ENCODE measurements at regions of chr15 and their contacts with region 1.

Region 1: GRCh38 chr15:38602901-38603670 is 38.5 kb upstream of the RASGRP1 start:
- DNase-seq: no peak
- H3K4me3 ChIP-seq: no peak overlapping the region
- H3K27ac ChIP-seq: no peak overlapping the region
- H3K4me1 ChIP-seq: peaks cover 14% of the 10 kb centered on the region
- CTCF ChIP-seq: no peak

Region 2: GRCh38 chr15:37981775-37982174 is 621.3 kb before region 1 on chr15:
- CTCF ChIA-PET with region 1: no interaction called
- POLR2A ChIA-PET with region 1: interaction called, 13 read pairs
- intact Hi-C with region 1: no loop called
- DNase-seq: peak; percentile 39
- H3K4me3 ChIP-seq: no peak overlapping the region
- H3K27ac ChIP-seq: no peak overlapping the region
- H3K4me1 ChIP-seq: no peaks in the 10 kb centered on the region
- CTCF ChIP-seq: peak; percentile 70

Region 3: GRCh38 chr15:38642689-38643270 is 39.7 kb after region 1 on chr15:
- CTCF ChIA-PET with region 1: no interaction called
- POLR2A ChIA-PET with region 1: no interaction called
- intact Hi-C with region 1: no loop called
- DNase-seq: peak; percentile 77
- H3K4me3 ChIP-seq: peak overlapping the region; percentile 3
- H3K27ac ChIP-seq: peak overlapping the region; percentile 79
- H3K4me1 ChIP-seq: peaks cover 35% of the 10 kb centered on the region
- CTCF ChIP-seq: no peak; the same call in 1 of the 2 replicates

Region 4: GRCh38 chr15:38853608-38854007 is 250.5 kb after region 1 on chr15:
- CTCF ChIA-PET with region 1: no interaction called
- POLR2A ChIA-PET with region 1: no interaction called
- intact Hi-C with region 1: no loop called
- DNase-seq: peak; percentile 11
- H3K4me3 ChIP-seq: no peak overlapping the region
- H3K27ac ChIP-seq: no peak overlapping the region
- H3K4me1 ChIP-seq: no peaks in the 10 kb centered on the region
- CTCF ChIP-seq: peak; percentile 58